Activated CD4-positive, alpha-beta memory T cell treated with anti-CD3 and anti-CD28 coated beads, Interleukin-2, amount 10 ng/mL, durations not matched to agents 7 days and 5 days (primary cell): ENCODE measurements at regions of chr14 and their contacts with region 1.

Region 1: DNA sequence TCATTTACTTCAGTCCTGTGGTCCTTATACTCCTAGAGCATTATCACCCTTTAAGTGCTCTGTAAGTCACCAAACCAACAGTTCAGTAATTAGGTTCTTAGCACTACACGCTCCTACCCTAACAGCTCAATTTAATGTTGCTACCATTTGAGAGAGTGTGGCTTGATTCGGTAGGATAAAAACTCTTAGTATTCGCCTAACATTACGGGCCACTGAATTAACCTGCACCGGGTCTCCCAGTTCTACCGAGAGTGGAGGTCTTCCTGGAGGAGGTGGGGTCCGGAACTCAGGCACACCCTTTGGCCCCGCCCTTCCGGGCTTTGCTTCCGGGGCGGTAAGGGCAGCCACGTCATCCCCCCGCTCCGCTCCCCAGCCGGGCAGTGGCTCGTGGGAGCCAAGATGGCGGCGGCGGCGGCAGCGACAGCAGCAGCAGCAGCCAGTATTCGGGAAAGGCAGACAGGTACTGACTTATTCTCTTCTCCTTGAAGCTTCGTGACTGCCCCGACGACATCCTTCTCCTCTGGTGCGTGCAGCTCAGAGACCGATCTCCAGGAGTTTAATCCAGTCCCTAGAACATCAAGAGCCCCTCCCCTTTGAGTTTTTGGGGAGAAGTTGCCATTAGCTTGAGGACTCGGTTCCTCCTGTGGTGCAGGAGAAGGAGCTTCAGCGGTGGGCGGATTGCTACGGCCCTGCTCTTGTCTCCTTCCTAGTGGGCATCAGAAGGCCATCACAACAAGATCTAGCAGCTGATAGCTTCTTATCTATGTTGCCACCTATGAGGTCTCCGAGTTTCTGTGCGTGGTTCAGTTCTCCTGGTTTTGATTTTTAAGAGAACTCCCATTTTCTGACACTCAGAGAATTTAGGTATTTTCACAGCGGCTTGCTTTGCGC is at the start of gene SCFD1:
- DNase-seq: peak; percentile 95
- H3K4me3 Mint-ChIP-seq: peak within 1 kb of the TSS; percentile 87
- H3K27ac Mint-ChIP-seq: peak within 1 kb of the TSS; percentile 93
- H3K4me1 Mint-ChIP-seq: peaks cover 41% of the 10 kb centered on the region
- H3K27me3 Mint-ChIP-seq: no peaks in the 10 kb centered on the region
- total RNA-seq, gene SCFD1: 61.8 to 65.4 TPM

Region 2: DNA sequence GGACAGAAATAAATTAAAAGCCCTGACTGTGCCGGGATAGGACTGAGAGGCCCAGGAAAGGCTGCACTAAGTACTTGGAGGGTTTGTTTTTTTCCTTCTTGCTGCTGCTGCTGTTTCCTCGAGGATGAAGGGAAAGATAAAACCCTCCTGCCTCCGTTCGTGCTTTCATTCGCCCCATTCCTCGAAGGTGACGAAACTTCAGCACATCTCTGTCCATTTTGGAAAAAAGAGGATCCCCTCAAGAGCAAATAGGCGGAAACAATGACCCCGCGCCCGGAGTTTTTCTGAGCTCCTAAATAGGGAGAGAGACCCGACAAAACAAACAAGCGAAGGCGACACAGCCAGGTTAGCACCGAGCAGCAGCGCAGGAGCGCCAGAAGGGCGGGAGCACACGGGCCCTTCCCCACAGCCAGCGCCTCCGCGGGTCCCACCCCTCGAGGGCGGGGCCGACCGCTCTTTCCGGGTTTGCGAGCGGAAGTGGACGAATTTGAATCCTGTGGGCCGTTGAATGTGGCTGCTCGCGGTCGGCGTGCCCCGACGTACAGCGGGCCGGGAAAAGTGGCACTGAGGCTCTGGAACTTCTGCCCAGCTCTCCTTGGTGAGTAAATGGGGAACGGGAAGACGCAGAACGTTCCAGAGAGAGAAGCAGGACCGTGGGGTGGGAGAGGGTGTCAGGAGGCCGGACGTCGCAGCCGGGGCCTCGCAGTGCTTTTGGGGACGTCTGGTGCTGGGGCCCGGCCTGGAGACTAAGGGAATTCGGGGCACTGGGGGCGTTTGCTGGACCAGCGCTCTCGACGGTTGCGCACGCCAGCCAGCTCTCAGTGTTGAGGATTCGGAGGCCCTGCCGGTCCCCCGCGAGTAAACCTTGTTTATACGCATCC is 63.3 kb before region 1 on chr14 and contains the start of gene G2E3:
- CTCF ChIA-PET with region 1: no interaction called
- POLR2A ChIA-PET with region 1: interaction called, 37 read pairs
- DNase-seq: peak; percentile 92
- H3K4me3 Mint-ChIP-seq: peak within 1 kb of the TSS; percentile 100
- H3K27ac Mint-ChIP-seq: peak within 1 kb of the TSS; percentile 99
- H3K4me1 Mint-ChIP-seq: peaks cover 31% of the 10 kb centered on the region
- H3K27me3 Mint-ChIP-seq: no peaks in the 10 kb centered on the region
- total RNA-seq, gene G2E3: 37.8 to 37.9 TPM

Region 3: DNA sequence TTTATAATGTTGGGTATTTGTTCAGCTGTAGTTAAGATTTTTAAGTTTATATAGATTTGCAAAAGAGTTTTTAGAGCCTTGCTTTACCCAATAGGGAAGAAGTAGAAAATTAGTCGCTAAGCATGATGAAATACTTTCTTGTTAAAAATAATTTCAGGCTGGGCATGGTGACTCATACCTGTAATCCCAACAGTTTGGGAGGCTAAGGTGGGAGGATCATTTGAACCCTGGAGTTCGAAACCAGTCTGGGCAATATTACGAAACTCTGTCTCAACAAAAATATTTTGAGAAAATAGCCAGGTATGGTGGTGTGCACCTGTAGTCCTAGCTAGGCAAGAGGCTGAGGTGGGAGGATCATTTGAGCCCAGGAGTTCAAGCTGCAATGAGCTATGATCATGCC is 18.8 kb before region 1 on chr14:
- CTCF ChIA-PET with region 1: no interaction called
- POLR2A ChIA-PET with region 1: interaction called, 44 read pairs
- DNase-seq: no peak
- H3K4me3 Mint-ChIP-seq: no peak overlapping the region
- H3K27ac Mint-ChIP-seq: no peak overlapping the region
- H3K4me1 Mint-ChIP-seq: no peaks in the 10 kb centered on the region
- H3K27me3 Mint-ChIP-seq: no peaks in the 10 kb centered on the region

Region 4: GRCh38 chr14:30610787-30611343 is 11.3 kb before region 1 on chr14:
- CTCF ChIA-PET with region 1: interaction called, 4 read pairs
- POLR2A ChIA-PET with region 1: interaction called, 44 read pairs
- DNase-seq: no peak
- H3K4me3 Mint-ChIP-seq: no peak overlapping the region
- H3K27ac Mint-ChIP-seq: no peak overlapping the region
- H3K4me1 Mint-ChIP-seq: no peaks in the 10 kb centered on the region
- H3K27me3 Mint-ChIP-seq: no peaks in the 10 kb centered on the region

Region 5: DNA sequence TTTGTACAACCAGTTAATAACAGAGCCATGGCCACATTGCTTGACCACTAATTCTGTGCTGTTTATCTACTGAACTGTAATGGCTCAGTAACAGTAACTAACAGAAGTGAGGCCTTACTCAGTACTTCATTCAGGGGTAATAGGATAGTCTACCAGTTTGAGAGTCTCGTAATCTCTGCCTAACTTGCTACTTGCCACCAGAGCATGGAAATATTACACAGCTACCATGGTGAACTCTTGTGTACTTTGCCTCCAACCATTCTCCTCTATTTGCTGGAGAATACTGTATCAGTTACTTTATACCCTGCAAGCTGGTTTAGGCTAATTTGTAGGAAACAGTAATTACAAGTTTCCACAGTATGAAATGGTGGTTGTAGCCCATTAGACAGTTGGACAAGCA is 10.5 kb after region 1 on chr14:
- CTCF ChIA-PET with region 1: interaction called, 3 read pairs
- POLR2A ChIA-PET with region 1: interaction called, 16 read pairs
- DNase-seq: no peak
- H3K4me3 Mint-ChIP-seq: no peak overlapping the region
- H3K27ac Mint-ChIP-seq: no peak overlapping the region
- H3K4me1 Mint-ChIP-seq: peaks cover 7% of the 10 kb centered on the region
- H3K27me3 Mint-ChIP-seq: no peaks in the 10 kb centered on the region

Region 6: GRCh38 chr14:31026395-31027118 is 404.4 kb after region 1 on chr14:
- CTCF ChIA-PET with region 1: no interaction called
- POLR2A ChIA-PET with region 1: interaction called, 23 read pairs
- DNase-seq: peak; percentile 94
- H3K4me3 Mint-ChIP-seq: peak overlapping the region; percentile 94
- H3K27ac Mint-ChIP-seq: peak overlapping the region; percentile 91
- H3K4me1 Mint-ChIP-seq: peaks cover 53% of the 10 kb centered on the region
- H3K27me3 Mint-ChIP-seq: no peaks in the 10 kb centered on the region